Mammary epithelial cell (primary cell): ENCODE measurements at regions of chr6 and their contacts with region 1.

Region 1: DNA sequence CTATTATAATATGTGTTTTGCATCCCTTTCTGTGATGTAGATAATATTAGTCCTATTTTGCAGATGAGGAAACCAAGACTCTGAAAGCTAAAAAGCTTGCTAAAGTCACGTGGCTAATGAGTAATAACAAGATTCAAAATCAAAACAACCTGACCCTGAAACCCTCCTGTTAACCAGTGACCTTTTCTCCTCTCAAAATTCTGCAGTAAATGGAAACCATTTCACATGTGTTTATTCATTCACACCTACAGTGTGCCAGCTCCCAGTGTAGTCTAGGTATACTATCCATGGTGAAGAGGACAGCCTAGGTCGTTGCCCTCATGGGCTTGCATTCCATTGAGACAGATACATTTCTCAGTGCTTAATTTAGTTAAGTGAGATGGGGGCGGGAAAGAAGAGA is 30.6 kb upstream of the PHACTR2 start:
- DNase-seq: no peak
- H3K4me3 ChIP-seq: no peak overlapping the region
- H3K27ac ChIP-seq: no peak overlapping the region
- H3K4me1 ChIP-seq: no peaks in the 10 kb centered on the region
- H3K27me3 ChIP-seq: no peaks in the 10 kb centered on the region
- CTCF ChIP-seq: no peak

Region 2: GRCh38 chr6:143556529-143556928 is 90.7 kb before region 1 on chr6:
- CTCF ChIA-PET with region 1: no interaction called
- dilution Hi-C with region 1: no loop called
- in situ Hi-C with region 1: no loop called
- intact Hi-C with region 1: no loop called
- DNase-seq: no peak
- H3K4me3 ChIP-seq: no peak overlapping the region
- H3K27ac ChIP-seq: no peak overlapping the region
- H3K4me1 ChIP-seq: peaks cover 7% of the 10 kb centered on the region
- H3K27me3 ChIP-seq: no peaks in the 10 kb centered on the region
- CTCF ChIP-seq: no peak

Region 3: GRCh38 chr6:143603455-143603854 is 43.7 kb before region 1 on chr6:
- CTCF ChIA-PET with region 1: no interaction called
- dilution Hi-C with region 1: loop called (anchors 5 kb)
- in situ Hi-C with region 1: no loop called
- intact Hi-C with region 1: no loop called
- DNase-seq: no peak
- H3K4me3 ChIP-seq: no peak overlapping the region
- H3K27ac ChIP-seq: no peak overlapping the region
- H3K4me1 ChIP-seq: no peaks in the 10 kb centered on the region
- H3K27me3 ChIP-seq: no peaks in the 10 kb centered on the region
- CTCF ChIP-seq: no peak